Upper lobe of right lung (tissue), 1 donor: ENCODE measurements at regions of chr17 and their contacts with region 1.

Region 1: GRCh38 chr17:38560508-38561318 is 45.0 kb downstream of the SRCIN1 start:
- DNase-seq: no peak
- ATAC-seq: no peak
- H3K4me3 ChIP-seq: no peak overlapping the region
- H3K27ac ChIP-seq: no peak overlapping the region
- H3K4me1 ChIP-seq: peaks cover 31% of the 10 kb centered on the region
- H3K27me3 ChIP-seq: peaks cover 63% of the 10 kb centered on the region
- CTCF ChIP-seq: no peak

Region 2: DNA sequence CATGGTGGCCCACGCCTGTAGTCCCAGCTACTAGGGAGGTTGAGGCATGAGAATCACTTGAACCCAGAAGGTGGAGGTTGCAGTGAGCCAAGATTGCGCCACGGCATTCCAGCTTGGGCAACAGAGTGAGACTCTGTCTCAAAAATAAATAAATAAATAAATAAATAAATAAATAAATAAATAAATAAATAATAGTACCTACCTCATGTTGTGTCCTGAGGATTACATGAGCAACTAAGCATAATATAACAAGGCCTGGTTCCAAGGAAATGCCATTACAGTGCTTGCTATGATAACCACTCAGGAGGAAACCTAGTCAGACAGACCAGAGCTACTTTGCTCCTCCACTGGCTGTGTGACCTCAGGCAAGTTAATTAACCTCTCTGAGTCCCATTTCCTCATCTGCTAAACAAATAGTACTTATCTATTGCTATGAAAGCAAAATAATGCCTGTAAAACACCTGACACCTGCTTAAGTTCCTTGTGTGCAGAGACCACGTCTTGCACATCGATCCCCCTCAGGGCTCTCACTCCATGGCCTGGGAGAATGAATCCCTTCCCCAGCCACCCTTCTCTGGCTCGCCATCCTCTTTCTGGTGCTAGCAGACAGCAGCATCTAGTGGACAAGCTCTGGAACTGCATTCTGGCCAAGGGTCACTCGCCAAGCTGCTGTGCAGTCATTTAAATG is 106.5 kb after region 1 on chr17:
- intact Hi-C with region 1: loop called (anchors 10 kb)
- DNase-seq: peak; percentile 68
- ATAC-seq: peak; percentile 90
- H3K4me3 ChIP-seq: no peak overlapping the region
- H3K27ac ChIP-seq: no peak overlapping the region
- H3K4me1 ChIP-seq: no peaks in the 10 kb centered on the region
- H3K27me3 ChIP-seq: peaks cover 23% of the 10 kb centered on the region
- CTCF ChIP-seq: peak; percentile 100